ENCODE measurements at regions of chr9 and their contacts with region 1.

Region 1: GRCh38 chr9:99221621-99222415 is at the starts of genes ALG2 and SEC61B:
- DNase-seq: peak; percentile 89
- H3K4me3 Mint-ChIP-seq: peak within 1 kb of the TSS; percentile 99
- H3K27ac Mint-ChIP-seq: peak within 1 kb of the TSS; percentile 98
- H3K4me1 Mint-ChIP-seq: peaks cover 67% of the 10 kb centered on the region
- H3K27me3 Mint-ChIP-seq: no peaks in the 10 kb centered on the region
- total RNA-seq, gene ALG2: 37.6 and 39.7 TPM in 2 replicates
- total RNA-seq, gene SEC61B: 180 and 184 TPM in 2 replicates

Region 2: DNA sequence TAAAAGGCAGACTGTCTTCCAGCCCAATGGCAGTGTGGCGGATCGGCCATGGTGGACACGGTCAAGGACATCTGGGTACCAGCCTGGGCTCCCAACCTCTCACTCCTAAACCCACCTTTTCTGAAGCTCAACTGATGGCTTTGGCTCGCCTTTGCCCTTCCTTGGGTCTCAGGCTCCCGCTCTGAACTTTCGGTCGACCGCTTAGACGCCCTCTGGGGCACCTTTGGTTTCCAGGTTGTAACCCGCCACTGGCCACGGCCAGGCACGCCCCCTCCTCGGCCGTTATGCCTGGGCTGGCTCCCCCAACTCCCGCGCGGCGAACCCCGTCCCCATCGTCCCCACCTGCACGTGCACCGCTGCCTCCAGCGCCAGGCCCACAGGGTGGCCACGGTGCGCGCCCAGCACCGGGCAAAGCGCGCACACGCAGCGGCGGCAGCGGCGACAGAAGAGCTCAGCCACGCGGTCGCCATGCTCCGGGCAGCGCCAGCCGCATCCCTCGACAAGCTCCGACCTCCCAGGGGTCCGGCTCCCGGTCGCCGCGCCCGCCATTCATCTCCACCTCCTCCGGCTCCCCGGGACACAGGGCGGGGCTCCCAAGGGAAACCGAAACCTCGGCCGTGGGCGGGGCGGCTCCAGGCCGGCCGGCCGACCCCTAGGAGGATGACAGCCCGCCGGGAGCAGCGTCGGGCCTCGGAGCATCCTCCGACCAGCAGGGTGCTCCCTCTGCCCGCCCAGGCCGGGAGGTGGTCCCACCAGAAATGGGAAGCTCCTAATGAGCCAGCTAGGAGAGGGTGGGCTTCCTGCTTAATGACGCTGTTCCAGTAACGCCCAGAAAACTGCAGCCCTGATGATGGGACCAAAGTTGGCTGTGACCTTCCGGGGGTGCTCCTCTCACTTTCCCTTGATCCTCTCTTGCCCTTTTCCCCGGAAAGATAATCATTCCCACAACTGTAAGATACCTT is 1102.9 kb before region 1 on chr9 and contains the start of gene TRIM14:
- intact Hi-C with region 1: loop called (anchors 10 kb)
- DNase-seq: peak; percentile 71
- H3K4me3 Mint-ChIP-seq: peak within 1 kb of the TSS; percentile 95
- H3K27ac Mint-ChIP-seq: peak within 1 kb of the TSS; percentile 98
- H3K4me1 Mint-ChIP-seq: peaks cover 42% of the 10 kb centered on the region
- H3K27me3 Mint-ChIP-seq: no peaks in the 10 kb centered on the region
- total RNA-seq, gene TRIM14: 41.7 and 42.0 TPM in 2 replicates

Region 3: DNA sequence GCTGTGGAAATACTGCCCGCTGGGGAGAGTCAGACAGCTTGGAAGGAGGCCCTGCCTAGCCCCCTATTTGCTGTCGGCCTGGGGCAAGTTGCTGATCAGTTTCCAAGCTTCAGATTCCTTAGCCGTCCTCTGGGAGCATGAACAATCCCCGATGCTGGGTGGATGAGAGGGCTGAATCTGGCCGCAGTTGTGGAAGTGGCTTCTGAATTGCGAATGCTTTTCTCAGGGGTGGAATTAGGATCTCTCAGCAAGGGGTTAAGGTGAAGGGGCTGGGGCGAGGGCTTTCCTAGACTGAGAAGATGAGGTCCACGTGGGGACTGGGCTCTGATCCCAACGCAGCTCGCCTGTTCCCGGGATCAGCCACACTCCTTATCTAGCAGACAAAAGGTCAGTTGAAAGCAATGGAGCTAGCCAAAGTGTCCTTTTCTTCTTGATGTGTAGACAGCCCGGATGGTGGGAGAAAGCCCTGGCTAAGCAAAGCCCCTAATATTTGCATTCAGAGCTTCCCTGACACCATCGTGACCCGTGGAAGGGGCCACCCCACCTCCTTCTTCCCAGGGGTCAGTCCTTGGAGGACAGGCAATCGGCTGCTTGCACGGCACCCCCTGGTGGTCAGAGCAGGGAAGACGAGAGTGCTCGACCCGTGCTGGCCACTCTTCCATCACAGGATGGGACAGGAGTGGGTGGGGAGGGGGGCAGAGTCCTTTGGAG is 223.2 kb before region 1 on chr9:
- intact Hi-C with region 1: no loop called
- DNase-seq: peak; percentile 41
- H3K4me3 Mint-ChIP-seq: no peak overlapping the region
- H3K27ac Mint-ChIP-seq: no peak overlapping the region
- H3K4me1 Mint-ChIP-seq: peaks cover 39% of the 10 kb centered on the region
- H3K27me3 Mint-ChIP-seq: peaks cover 21% of the 10 kb centered on the region

Region 4: DNA sequence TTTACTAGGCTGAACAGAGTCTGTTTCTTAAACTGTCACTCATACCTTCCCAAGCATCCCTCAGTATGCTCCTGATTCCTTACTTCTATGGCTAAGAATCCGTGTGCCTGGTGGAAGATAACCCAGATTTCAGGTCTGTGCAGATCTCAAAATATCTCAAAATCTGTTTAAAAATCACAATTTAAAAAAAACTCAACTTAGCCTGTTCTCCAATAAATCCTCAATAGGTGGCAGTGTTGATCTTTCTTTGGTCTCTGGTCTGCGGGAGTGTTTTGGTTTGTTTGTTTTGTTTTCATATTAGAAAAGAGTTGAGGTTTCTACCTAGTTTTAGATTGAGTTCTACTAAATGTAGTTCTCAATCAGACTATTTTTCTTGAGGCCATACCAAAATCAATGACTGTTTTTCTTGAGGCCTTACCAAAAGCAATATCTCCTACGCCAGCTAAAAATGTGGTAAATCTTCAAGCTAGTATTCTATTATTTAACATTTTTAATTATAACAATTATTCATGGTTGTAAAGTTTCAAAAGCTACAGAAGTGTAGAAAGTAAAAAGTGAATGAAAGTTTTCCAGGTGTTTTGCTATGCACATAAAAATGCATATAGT is 59.0 kb before region 1 on chr9:
- intact Hi-C with region 1: loop called (anchors 2 kb)
- DNase-seq: no peak
- H3K4me3 Mint-ChIP-seq: no peak overlapping the region
- H3K27ac Mint-ChIP-seq: no peak overlapping the region
- H3K4me1 Mint-ChIP-seq: peaks cover 25% of the 10 kb centered on the region
- H3K27me3 Mint-ChIP-seq: peaks cover 9% of the 10 kb centered on the region

Region 5: DNA sequence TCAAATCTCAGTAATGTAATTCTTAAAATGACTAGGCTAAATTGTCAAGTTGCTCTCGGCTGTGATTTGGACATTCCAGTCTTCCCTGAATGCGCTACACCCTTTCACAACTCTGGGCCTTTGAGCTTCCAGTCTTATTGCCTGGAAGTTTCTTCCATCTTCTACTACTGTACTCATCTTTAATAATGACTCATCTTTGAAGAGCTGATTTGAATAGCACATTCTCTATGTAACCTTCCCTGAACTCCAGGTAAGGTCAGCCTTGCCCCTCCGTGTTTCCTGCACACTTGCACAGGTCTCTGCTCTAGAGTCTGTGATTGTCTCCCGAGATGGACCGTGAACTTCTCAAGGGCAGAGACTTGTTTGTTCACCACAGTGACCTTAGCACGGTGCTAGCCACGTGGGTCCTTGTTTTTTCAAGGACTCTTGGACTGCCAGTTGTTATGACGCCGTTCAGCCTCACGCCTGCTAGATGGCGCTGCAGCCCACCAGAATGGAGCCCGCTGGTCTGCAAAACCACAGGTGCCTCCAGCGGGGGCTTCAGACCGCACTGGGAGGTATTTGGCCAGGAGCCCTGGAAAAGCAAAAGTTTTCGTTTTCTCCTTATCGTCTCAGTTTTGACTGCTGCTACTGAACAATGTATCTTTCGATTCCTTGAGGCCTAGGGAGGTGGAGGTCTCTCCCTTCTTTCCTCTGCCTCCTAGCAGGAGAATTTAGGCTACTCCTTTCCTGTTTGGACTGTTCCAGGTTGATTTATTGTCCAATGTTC is 44.6 kb after region 1 on chr9:
- intact Hi-C with region 1: loop called (anchors 1 kb)
- DNase-seq: peak; percentile 50
- H3K4me3 Mint-ChIP-seq: peak overlapping the region; percentile 3
- H3K27ac Mint-ChIP-seq: no peak overlapping the region
- H3K4me1 Mint-ChIP-seq: peaks cover 14% of the 10 kb centered on the region
- H3K27me3 Mint-ChIP-seq: peaks cover 14% of the 10 kb centered on the region

Region 6: GRCh38 chr9:99309141-99309939 is 87.5 kb after region 1 on chr9:
- intact Hi-C with region 1: no loop called
- DNase-seq: no peak
- H3K4me3 Mint-ChIP-seq: no peak overlapping the region
- H3K27ac Mint-ChIP-seq: no peak overlapping the region
- H3K4me1 Mint-ChIP-seq: no peaks in the 10 kb centered on the region
- H3K27me3 Mint-ChIP-seq: peaks cover 4% of the 10 kb centered on the region